CD8-positive, alpha-beta T cell (primary cell): ENCODE measurements at regions of chr11 and their contacts with region 1.

Region 1: GRCh38 chr11:71928737-71929452 is at the start of gene RNF121:
- DNase-seq: peak; percentile 94 to 99 (median 97)
- ATAC-seq: peak; percentile 86
- H3K4me3 ChIP-seq: peak within 1 kb of the TSS; percentile 67 to 98
- H3K4me3 Mint-ChIP-seq: peak within 1 kb of the TSS; percentile 100
- H3K27ac ChIP-seq: peak within 1 kb of the TSS; percentile 90 to 96
- H3K27ac Mint-ChIP-seq: peak within 1 kb of the TSS; percentile 99
- H3K4me1 ChIP-seq: peaks cover 22% of the 10 kb centered on the region
- H3K4me1 Mint-ChIP-seq: peaks cover 57% of the 10 kb centered on the region
- H3K27me3 ChIP-seq: no peaks in the 10 kb centered on the region
- H3K27me3 Mint-ChIP-seq: no peaks in the 10 kb centered on the region
- CTCF ChIP-seq: no peak
- total RNA-seq, gene RNF121: 8.5 to 9.0 TPM

Region 2: GRCh38 chr11:71787098-71787823 is 141.6 kb before region 1 on chr11:
- CTCF ChIA-PET with region 1: no interaction called
- POLR2A ChIA-PET with region 1: no interaction called
- intact Hi-C with region 1: loop called (anchors 2 kb)
- DNase-seq: peak; percentile 77 to 97 (median 90)
- ATAC-seq: peak; percentile 96
- H3K4me3 ChIP-seq: peak overlapping the region; percentile 84 to 96
- H3K4me3 Mint-ChIP-seq: peak overlapping the region; percentile 94
- H3K27ac ChIP-seq: peak overlapping the region; percentile 80 to 97
- H3K27ac Mint-ChIP-seq: peak overlapping the region; percentile 95
- H3K4me1 ChIP-seq: no peaks in the 10 kb centered on the region
- H3K4me1 Mint-ChIP-seq: peaks cover 6% of the 10 kb centered on the region
- H3K27me3 ChIP-seq: no peaks in the 10 kb centered on the region
- H3K27me3 Mint-ChIP-seq: no peaks in the 10 kb centered on the region
- CTCF ChIP-seq: no peak

Region 3: GRCh38 chr11:72112321-72113219 is 183.7 kb after region 1 on chr11 and contains the start of gene ANAPC15:
- CTCF ChIA-PET with region 1: no interaction called
- POLR2A ChIA-PET with region 1: interaction called, 10 read pairs
- intact Hi-C with region 1: loop called in 1 of 2 experiments (anchors 1 kb)
- DNase-seq: peak; percentile 95 to 100 (median 98)
- ATAC-seq: peak; percentile 85
- H3K4me3 ChIP-seq: peak within 1 kb of the TSS; percentile 63 to 65
- H3K4me3 Mint-ChIP-seq: peak within 1 kb of the TSS; percentile 96
- H3K27ac ChIP-seq: peak within 1 kb of the TSS; percentile 88 to 94
- H3K27ac Mint-ChIP-seq: peak within 1 kb of the TSS; percentile 99
- H3K4me1 ChIP-seq: peaks cover 16% of the 10 kb centered on the region
- H3K4me1 Mint-ChIP-seq: peaks cover 23% of the 10 kb centered on the region
- H3K27me3 ChIP-seq: no peaks in the 10 kb centered on the region
- H3K27me3 Mint-ChIP-seq: peaks cover 4% of the 10 kb centered on the region
- CTCF ChIP-seq: no peak
- total RNA-seq, gene ANAPC15: 42.1 to 46.2 TPM

Region 4: DNA sequence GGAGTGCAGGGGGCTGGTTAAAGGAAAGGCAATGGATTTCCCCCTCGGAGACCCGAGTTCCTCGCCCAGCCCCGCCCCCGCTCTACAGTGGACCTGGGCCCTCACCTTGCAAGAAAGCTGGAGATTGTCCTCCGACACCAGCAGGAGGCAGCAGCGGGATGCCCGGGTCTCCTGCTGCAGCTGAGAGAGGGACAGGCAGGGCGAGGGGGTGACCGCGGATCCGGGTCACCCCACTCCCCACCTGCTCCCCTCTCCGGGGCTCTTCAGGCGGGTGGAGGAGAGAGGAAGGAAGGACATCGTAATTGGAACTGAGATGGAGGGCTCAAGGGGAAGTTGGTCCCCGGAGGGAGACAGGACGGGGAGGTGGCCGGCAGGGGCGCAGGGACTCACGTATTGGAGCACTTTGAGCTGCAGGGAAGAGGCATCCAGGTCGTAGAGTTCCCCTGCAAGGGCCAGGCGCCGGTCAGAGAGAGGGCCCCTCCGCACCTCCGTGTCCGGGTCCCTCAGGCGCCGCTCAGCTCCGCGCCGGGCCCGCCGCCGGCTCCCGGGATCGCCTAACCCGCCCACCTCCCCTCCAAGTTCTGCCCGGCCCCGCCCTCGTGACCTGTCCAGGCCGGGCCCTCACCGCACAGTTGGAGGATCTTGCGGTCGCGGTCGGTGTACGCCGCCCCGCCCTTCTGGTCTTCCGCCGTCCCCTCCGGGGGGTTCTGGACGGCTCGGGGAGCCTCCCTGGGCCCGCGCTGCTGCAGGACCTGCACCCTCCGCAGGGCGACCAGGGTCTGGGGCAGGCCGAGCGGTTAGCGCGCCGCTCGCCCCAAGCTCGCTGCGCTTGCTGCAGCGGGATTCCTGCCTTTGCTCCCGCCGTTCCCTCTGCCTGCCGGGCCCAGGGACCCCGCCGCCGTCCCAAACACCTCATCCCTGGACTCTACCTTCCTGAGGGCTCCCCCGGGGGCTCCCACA is 661.2 kb after region 1 on chr11:
- CTCF ChIA-PET with region 1: no interaction called
- POLR2A ChIA-PET with region 1: no interaction called
- intact Hi-C with region 1: no loop called
- DNase-seq: peak; percentile 20 to 75 (median 60)
- ATAC-seq: no peak
- H3K4me3 ChIP-seq: peak overlapping the region; percentile 31 to 33
- H3K4me3 Mint-ChIP-seq: peak overlapping the region; percentile 79
- H3K27ac ChIP-seq: no peak overlapping the region
- H3K27ac Mint-ChIP-seq: no peak overlapping the region
- H3K4me1 ChIP-seq: peaks cover 40% of the 10 kb centered on the region
- H3K4me1 Mint-ChIP-seq: peaks cover 38% of the 10 kb centered on the region
- H3K27me3 ChIP-seq: peaks cover 5 to 6% of the 10 kb centered on the region in 2 experiments
- H3K27me3 Mint-ChIP-seq: peaks cover 41% of the 10 kb centered on the region
- CTCF ChIP-seq: peak; percentile 56